Activated naive CD4-positive, alpha-beta T cell treated with anti-CD3 and anti-CD28 coated beads for 36 hours (primary cell): ENCODE measurements at regions of chr5 and their contacts with region 1.

Region 1: DNA sequence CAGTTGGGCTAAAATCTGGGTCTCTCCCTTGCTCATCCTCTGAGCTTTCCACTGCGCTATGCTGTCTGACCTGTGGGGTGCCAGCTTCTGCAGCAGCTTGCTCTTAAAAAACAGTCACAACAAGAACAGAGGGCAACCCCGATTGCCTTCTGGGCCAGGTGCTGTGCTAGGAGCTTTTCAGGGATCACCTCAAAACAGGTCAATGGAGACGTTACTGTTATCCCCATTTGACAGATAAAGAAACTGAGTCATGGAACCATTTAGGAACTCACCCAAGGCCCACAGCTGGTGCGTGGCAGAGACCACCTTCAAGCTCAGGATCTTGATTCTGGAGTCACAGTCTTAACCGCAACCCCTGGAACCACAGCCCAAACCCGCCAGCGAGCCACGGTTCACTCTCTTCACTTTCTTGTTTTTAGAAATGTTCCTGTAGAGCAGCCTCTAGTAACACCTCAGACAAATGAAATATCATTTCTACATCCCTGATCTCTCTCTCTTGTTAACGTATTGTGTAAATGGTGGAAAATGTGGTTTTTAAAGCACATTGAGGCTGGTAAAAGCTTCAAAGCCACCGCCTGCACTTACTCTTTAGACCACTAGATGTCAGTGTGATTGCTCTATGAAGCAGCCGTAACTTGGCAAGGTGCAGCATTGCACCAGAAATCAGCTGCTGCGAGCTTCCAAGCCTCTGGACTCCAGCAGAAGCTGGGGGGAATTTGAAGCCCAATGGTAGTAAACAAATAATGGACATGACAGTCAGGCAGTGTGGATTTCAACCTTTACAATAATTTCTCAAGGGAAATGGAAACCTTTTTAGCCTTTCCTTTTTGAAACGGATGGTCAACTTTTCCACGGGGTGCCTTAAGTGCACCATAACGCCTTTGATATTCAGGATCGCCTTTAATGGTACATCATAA is 1.7 kb downstream of the FYB1 start:
- DNase-seq: peak; percentile 91
- H3K4me3 Mint-ChIP-seq: peak overlapping the region; percentile 72
- H3K27ac Mint-ChIP-seq: peak overlapping the region; percentile 91
- H3K4me1 Mint-ChIP-seq: peaks cover 70% of the 10 kb centered on the region
- H3K27me3 Mint-ChIP-seq: no peaks in the 10 kb centered on the region

Region 2: GRCh38 chr5:38845526-38846378 is 371.9 kb before region 1 on chr5 and contains the start of gene OSMR:
- CTCF ChIA-PET with region 1: no interaction called
- intact Hi-C with region 1: loop called (anchors 10 kb)
- DNase-seq: peak; percentile 55
- H3K4me3 Mint-ChIP-seq: peak within 1 kb of the TSS; percentile 77
- H3K27ac Mint-ChIP-seq: no peak within 1 kb of the TSS
- H3K4me1 Mint-ChIP-seq: peaks cover 5% of the 10 kb centered on the region
- H3K27me3 Mint-ChIP-seq: peaks cover 54% of the 10 kb centered on the region
- total RNA-seq, gene OSMR: 0.17 to 0.43 TPM

Region 3: GRCh38 chr5:39058178-39058921 is 159.3 kb before region 1 on chr5:
- CTCF ChIA-PET with region 1: no interaction called
- intact Hi-C with region 1: no loop called
- DNase-seq: no peak
- H3K4me3 Mint-ChIP-seq: no peak overlapping the region
- H3K27ac Mint-ChIP-seq: no peak overlapping the region
- H3K4me1 Mint-ChIP-seq: peaks cover 53% of the 10 kb centered on the region
- H3K27me3 Mint-ChIP-seq: no peaks in the 10 kb centered on the region

Region 4: GRCh38 chr5:39148983-39149534 is 68.6 kb before region 1 on chr5:
- CTCF ChIA-PET with region 1: interaction called, 39 read pairs
- intact Hi-C with region 1: loop called (anchors 1 kb)
- DNase-seq: no peak
- H3K4me3 Mint-ChIP-seq: no peak overlapping the region
- H3K27ac Mint-ChIP-seq: peak overlapping the region; percentile 65
- H3K4me1 Mint-ChIP-seq: peaks cover 78% of the 10 kb centered on the region
- H3K27me3 Mint-ChIP-seq: no peaks in the 10 kb centered on the region

Region 5: GRCh38 chr5:39202597-39203274 is 14.9 kb before region 1 on chr5:
- CTCF ChIA-PET with region 1: interaction called, 42 read pairs
- intact Hi-C with region 1: loop called (anchors 2 kb)
- DNase-seq: peak; percentile 55
- H3K4me3 Mint-ChIP-seq: peak overlapping the region; percentile 83
- H3K27ac Mint-ChIP-seq: peak overlapping the region; percentile 99
- H3K4me1 Mint-ChIP-seq: peaks cover 37% of the 10 kb centered on the region
- H3K27me3 Mint-ChIP-seq: no peaks in the 10 kb centered on the region

Region 6: DNA sequence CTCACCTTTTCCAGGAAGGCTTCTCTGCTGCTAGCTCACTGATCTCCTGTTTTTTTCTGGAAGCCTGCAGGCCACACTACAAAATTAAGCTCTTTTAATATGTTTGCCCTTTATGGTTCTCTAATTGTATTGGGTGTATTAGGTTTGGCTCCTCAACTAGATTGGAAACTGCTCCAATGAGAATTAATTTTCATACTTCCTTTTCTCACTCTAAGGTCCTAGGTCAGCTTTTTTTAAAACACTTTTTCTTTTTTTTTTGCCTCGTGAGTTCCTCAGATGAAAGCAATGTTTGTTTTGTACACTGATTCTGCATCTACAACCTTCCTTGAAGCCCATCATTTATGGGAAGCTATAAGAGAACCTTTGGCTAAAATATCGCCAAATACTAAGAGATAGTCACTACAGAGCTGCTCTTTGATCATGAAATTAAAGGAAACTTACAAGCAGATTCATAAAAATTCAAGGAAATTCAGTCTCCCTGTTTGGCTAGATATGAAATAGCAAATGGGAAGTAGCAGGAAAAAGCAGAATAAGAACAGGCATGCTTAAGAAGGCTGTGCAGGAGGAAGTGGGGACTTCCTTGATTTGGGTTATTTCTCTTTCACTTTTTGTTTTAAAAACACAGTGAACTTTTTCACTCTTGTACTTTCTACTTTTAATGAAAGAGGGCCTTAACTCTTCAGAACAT is 56.9 kb after region 1 on chr5:
- CTCF ChIA-PET with region 1: interaction called, 317 read pairs
- intact Hi-C with region 1: loop called (anchors 1 kb)
- DNase-seq: no peak
- H3K4me3 Mint-ChIP-seq: peak overlapping the region; percentile 74
- H3K27ac Mint-ChIP-seq: peak overlapping the region; percentile 94
- H3K4me1 Mint-ChIP-seq: peaks cover 51% of the 10 kb centered on the region
- H3K27me3 Mint-ChIP-seq: no peaks in the 10 kb centered on the region

Region 7: GRCh38 chr5:39547553-39548154 is 330.0 kb after region 1 on chr5:
- CTCF ChIA-PET with region 1: interaction called, 3 read pairs
- intact Hi-C with region 1: loop called (anchors 1 kb)
- DNase-seq: peak; percentile 20
- H3K4me3 Mint-ChIP-seq: no peak overlapping the region
- H3K27ac Mint-ChIP-seq: no peak overlapping the region
- H3K4me1 Mint-ChIP-seq: peaks cover 2% of the 10 kb centered on the region
- H3K27me3 Mint-ChIP-seq: no peaks in the 10 kb centered on the region